AG04449 (cell line): ENCODE measurements at regions of chr10 and their contacts with region 1.

Region 1: DNA sequence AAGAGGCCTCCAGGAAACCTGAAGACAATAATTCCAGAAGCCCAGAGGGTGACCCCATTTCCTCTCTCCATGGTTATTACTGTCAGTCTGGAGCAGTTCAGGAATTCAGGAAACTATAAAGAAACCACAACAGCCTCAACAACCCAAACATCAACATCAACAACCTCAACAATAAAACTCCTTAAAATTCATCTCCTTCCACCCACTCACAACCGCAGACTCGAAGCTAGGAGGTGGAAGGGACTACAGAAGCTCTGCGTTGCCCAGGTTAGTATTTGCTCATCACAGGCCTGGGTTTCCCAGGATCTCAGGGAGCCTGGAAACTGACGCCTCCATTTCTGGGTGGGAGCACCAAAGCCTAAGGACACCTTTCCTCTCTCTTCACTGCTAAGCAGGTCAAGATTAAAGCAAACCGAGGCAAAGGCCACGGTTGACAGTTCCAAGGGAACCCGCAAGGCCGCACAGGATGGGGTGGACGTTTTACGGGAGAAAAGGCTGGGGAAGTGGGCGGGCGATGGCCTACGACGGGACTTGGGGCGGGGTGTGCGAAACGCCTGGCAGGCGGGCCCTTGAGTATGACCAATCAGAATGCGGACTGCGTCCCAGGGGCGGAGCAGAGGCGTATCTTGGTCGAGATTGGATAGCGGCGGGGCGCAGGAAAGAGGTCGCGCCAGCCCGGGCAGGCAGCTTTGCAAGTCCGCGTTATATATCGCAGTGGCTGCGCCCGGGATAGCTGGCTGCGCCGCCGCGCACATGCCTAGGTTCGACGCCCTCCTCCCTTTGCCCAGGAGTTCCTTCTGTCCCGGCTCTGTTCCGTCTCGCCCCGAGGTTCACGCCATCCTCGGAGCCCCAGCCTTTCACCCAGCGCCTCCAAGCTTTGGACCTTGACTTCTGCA is at the start of gene ELOVL3:
- DNase-seq: peak; percentile 56
- H3K4me3 ChIP-seq: peak within 1 kb of the TSS; percentile 45
- CTCF ChIP-seq: no peak

Region 2: GRCh38 chr10:101968940-101969321 is 257.0 kb before region 1 on chr10:
- CTCF ChIA-PET with region 1: no interaction called
- POLR2A ChIA-PET with region 1: no interaction called
- DNase-seq: no peak
- H3K4me3 ChIP-seq: no peak overlapping the region
- CTCF ChIP-seq: no peak

Region 3: GRCh38 chr10:102208311-102209035 is 17.4 kb before region 1 on chr10:
- CTCF ChIA-PET with region 1: interaction called, 10 read pairs
- POLR2A ChIA-PET with region 1: no interaction called
- DNase-seq: no peak
- H3K4me3 ChIP-seq: no peak overlapping the region
- CTCF ChIP-seq: no peak

Region 4: GRCh38 chr10:102254426-102254825 is 28.5 kb after region 1 on chr10:
- CTCF ChIA-PET with region 1: interaction called, 12 read pairs
- POLR2A ChIA-PET with region 1: no interaction called
- DNase-seq: no peak
- H3K4me3 ChIP-seq: no peak overlapping the region
- CTCF ChIP-seq: no peak

Region 5: DNA sequence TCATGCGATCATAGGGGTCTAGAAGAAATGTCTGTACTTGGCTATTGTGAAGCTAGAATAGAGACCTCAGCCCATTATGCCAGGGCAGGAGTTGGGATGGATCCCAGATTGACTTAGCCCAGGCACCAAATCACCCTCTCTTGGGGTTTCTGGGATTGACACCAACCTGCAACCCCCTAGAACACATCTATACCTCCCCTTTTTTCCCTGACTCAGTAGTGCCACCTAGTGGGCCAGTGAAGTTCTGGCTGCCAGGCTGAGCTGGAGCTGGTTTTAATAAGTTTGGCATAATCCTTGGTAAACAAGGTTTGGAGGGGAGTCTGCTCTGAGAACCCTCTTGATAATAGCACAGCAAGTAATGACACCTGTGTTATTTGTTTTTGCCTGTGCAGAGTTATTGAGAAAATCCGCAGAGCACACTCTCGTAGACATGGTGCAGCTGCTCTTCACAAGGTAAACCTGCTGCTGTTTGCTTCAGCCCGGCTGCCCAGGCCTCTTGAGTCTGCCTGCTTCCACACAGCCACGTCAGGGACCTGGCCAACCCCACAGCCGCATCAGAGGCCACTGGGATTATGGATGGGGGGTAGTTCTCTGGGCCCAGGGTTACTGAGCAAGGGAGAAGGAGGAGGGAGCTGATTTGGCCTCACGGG is 126.3 kb after region 1 on chr10:
- CTCF ChIA-PET with region 1: interaction called, 942 read pairs
- POLR2A ChIA-PET with region 1: no interaction called
- DNase-seq: no peak
- H3K4me3 ChIP-seq: no peak overlapping the region
- CTCF ChIP-seq: peak; percentile 83

Region 6: DNA sequence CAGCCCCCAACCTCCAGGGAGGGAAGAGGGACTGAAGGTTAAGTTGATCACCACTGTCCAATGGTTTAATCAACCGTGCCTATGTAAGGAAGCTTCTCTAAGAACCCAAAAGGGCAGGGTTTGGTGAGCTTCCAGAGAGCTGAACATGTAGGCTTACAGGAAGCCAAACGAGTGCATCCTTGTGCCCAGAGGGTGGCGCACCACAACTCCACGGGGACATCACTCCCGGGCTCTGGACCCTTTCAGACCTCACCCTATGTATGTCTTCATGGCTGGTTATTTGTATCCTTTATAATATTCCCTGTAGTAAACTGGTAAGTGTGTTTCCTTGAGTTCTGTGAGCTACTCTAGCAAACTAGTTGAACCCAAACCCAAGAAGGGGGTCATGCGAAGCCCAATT is 158.2 kb after region 1 on chr10:
- CTCF ChIA-PET with region 1: interaction called, 13 read pairs
- POLR2A ChIA-PET with region 1: no interaction called
- DNase-seq: no peak
- H3K4me3 ChIP-seq: no peak overlapping the region
- CTCF ChIP-seq: peak; percentile 26

Region 7: DNA sequence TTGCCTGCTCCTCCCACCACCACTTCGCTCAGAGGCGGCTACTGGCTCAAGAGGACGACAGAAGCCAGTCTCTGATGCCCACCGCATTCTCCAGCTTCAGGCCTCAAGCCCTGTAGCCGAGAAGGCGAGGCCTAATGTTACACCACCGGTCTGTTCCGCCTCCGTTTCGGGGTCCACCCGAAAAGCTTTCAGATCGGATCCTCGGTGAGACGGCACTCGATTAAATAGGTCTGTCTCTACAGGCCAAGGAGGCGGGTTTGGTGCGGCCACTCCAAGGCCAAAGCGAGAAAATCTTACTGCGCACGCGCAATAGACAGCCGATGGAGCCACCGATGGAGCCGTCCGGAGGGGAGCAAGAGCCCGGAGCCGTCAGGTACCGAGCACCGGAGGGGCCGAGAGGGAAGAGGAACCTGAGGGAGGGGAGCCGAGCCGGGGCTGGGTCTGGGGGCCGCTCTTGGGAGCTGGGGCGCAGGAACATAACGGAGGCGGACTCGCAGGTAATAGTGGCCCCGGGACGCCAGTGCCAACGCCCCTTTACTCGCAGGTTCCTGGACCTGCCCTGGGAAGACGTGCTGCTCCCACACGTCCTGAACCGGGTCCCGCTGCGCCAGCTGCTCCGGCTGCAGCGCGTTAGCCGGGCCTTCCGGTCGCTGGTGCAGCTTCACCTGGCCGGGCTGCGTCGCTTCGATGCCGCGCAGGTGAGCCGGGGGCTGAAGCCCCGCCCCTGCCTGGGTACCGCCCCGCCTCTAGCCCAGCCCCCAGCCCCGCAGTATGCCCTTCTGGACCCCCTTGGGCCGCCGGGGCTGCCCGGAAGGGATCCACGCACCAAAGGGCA is 195.1 kb after region 1 on chr10 and contains the start of gene FBXL15:
- CTCF ChIA-PET with region 1: interaction called, 136 read pairs
- POLR2A ChIA-PET with region 1: no interaction called
- DNase-seq: peak; percentile 71
- H3K4me3 ChIP-seq: peak within 1 kb of the TSS; percentile 92
- CTCF ChIP-seq: no peak

Region 8: GRCh38 chr10:102485093-102485784 is 259.3 kb after region 1 on chr10:
- CTCF ChIA-PET with region 1: interaction called, 10 read pairs
- POLR2A ChIA-PET with region 1: no interaction called
- DNase-seq: no peak
- H3K4me3 ChIP-seq: no peak overlapping the region
- CTCF ChIP-seq: no peak